Mammary epithelial cell (primary cell): ENCODE measurements at regions of chr3 and their contacts with region 1.

Region 1: DNA sequence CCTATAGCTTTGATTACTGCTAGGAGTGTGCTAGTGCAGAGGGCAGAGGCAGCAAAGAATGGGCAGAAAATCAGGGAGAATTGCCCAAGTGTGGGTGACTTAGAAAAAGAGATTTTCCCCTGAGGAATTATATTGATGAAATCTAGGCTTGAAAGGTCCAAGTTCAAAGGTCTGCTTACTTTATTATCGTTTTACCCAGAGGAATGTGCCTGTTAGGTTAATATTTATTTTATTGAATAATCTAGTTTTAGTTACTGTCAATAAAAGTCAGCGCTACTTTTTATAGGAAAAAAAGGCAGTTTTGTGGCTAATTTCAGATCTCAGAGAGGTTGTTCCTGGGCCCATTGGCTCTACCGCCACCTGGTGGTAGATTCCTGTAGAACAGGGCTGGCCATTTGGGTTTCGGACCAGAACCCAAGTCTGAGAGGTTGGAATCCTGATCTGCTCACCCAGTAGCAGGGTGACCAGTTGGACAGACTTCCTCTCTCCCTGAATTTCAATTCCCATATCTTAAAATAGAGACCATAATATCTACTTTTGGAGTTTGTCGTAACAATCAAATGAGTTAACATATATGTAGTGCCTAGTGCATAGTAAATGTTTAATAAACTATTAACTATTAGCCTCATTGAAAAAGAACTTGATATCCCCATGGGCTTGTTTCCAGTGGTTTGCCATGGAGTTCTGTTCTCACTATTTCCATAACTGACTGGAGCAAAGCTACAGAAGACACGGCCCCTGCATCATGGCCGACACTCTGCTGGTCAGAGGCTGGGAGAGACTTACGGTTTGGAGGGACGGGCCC is 62.7 kb upstream of the ZNF148 start:
- DNase-seq: peak; percentile 13
- H3K4me3 ChIP-seq: no peak overlapping the region
- H3K27ac ChIP-seq: no peak overlapping the region
- H3K4me1 ChIP-seq: peaks cover 14% of the 10 kb centered on the region
- H3K27me3 ChIP-seq: no peaks in the 10 kb centered on the region
- CTCF ChIP-seq: peak; percentile 97

Region 2: GRCh38 chr3:124887177-124887931 is 550.5 kb before region 1 on chr3 and contains the start of gene ITGB5:
- CTCF ChIA-PET with region 1: no interaction called
- dilution Hi-C with region 1: no loop called
- in situ Hi-C with region 1: no loop called
- intact Hi-C with region 1: no loop called
- DNase-seq: peak; percentile 80
- H3K4me3 ChIP-seq: peak within 1 kb of the TSS; percentile 64 to 85 (median 80)
- H3K27ac ChIP-seq: peak within 1 kb of the TSS; percentile 76
- H3K4me1 ChIP-seq: peaks cover 62% of the 10 kb centered on the region
- H3K27me3 ChIP-seq: no peaks in the 10 kb centered on the region
- CTCF ChIP-seq: no peak
- total RNA-seq, gene ITGB5: 110 to 172 TPM

Region 3: GRCh38 chr3:124928333-124929202 is 509.3 kb before region 1 on chr3:
- CTCF ChIA-PET with region 1: no interaction called
- dilution Hi-C with region 1: no loop called
- in situ Hi-C with region 1: loop called (anchors 10 kb)
- intact Hi-C with region 1: loop called (anchors 1 kb)
- DNase-seq: peak; percentile 45
- H3K4me3 ChIP-seq: no peak overlapping the region
- H3K27ac ChIP-seq: no peak overlapping the region
- H3K4me1 ChIP-seq: no peaks in the 10 kb centered on the region
- H3K27me3 ChIP-seq: no peaks in the 10 kb centered on the region
- CTCF ChIP-seq: peak; percentile 64 to 78

Region 4: GRCh38 chr3:124995460-124995994 is 442.3 kb before region 1 on chr3:
- CTCF ChIA-PET with region 1: interaction called, 6 read pairs
- dilution Hi-C with region 1: no loop called
- in situ Hi-C with region 1: loop called (anchors 10 to 25 kb)
- intact Hi-C with region 1: loop called (anchors 1 kb)
- DNase-seq: peak; percentile 27
- H3K4me3 ChIP-seq: no peak overlapping the region
- H3K27ac ChIP-seq: no peak overlapping the region
- H3K4me1 ChIP-seq: no peaks in the 10 kb centered on the region
- H3K27me3 ChIP-seq: no peaks in the 10 kb centered on the region
- CTCF ChIP-seq: peak; percentile 65 to 67

Region 5: DNA sequence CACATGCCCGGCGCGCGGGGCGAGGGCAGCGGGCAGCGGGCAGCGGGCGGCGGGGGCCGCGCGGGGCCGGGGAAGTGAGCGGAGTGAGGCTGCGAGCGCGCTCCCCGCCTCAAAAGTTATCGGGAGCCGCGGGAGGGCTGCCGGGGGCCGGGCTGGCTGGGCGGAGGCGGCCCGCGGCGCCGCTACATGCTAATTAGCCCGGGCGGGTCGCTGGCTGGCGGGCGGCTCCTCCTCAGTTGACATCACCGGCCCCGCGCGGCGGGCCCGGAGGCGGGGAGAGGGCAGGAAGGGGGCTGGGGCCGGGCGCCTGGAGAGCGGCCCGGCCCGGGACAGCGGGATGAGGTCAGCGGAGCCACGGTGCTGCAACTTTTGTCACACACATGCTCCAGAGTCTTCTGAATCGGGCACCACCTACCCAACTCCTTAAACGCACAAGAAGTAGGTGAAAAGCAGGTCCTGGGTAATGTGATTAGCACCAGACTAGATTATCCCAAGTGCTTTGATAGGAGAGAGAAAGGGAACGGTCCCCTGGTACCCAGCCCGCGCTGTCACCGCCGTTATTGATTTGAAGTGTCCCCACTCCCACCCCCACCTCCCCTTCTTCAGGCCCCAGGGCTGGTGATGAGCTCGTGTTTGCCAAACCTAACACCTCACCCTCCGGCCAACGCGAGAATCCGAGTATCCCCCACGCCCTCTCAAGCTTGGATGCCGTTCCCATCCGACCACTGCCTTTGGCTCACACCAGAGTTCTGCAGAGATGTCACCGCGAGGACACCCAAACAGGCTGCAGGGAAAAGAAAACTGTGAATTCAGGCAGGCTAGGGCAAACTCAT is 381.7 kb before region 1 on chr3 and contains the start of gene HEG1:
- CTCF ChIA-PET with region 1: no interaction called
- dilution Hi-C with region 1: no loop called
- in situ Hi-C with region 1: no loop called
- intact Hi-C with region 1: loop called (anchors 5 kb)
- DNase-seq: peak; percentile 73
- H3K4me3 ChIP-seq: peak within 1 kb of the TSS; percentile 59 to 79 (median 77)
- H3K27ac ChIP-seq: peak within 1 kb of the TSS; percentile 60
- H3K4me1 ChIP-seq: peaks cover 58% of the 10 kb centered on the region
- H3K27me3 ChIP-seq: no peaks in the 10 kb centered on the region
- CTCF ChIP-seq: no peak
- total RNA-seq, gene HEG1: 24.8 to 33.8 TPM

Region 6: GRCh38 chr3:125212509-125213244 is 225.2 kb before region 1 on chr3 and contains the start of gene SLC12A8:
- CTCF ChIA-PET with region 1: no interaction called
- dilution Hi-C with region 1: no loop called
- in situ Hi-C with region 1: no loop called
- intact Hi-C with region 1: loop called (anchors 5 kb)
- DNase-seq: no peak
- H3K4me3 ChIP-seq: peak within 1 kb of the TSS; percentile 40 to 54 (median 44)
- H3K27ac ChIP-seq: no peak within 1 kb of the TSS
- H3K4me1 ChIP-seq: peaks cover 10% of the 10 kb centered on the region
- H3K27me3 ChIP-seq: no peaks in the 10 kb centered on the region
- CTCF ChIP-seq: no peak
- total RNA-seq, gene SLC12A8: 12.5 to 24.8 TPM